ENCODE measurements at regions of chr11 and their contacts with region 1.

Region 1: GRCh38 chr11:18395735-18396504 is 1.6 kb downstream of the LDHA start:
- DNase-seq: peak; percentile 97
- ATAC-seq: peak; percentile 70
- H3K4me3 Mint-ChIP-seq: peak overlapping the region; percentile 99
- H3K27ac Mint-ChIP-seq: peak overlapping the region; percentile 98
- H3K4me1 Mint-ChIP-seq: peaks cover 60% of the 10 kb centered on the region
- H3K27me3 Mint-ChIP-seq: no peaks in the 10 kb centered on the region

Region 2: GRCh38 chr11:18027475-18027874 is 368.4 kb before region 1 on chr11:
- CTCF ChIA-PET with region 1: no interaction called
- DNase-seq: no peak
- ATAC-seq: no peak
- H3K4me3 Mint-ChIP-seq: no peak overlapping the region
- H3K27ac Mint-ChIP-seq: no peak overlapping the region
- H3K4me1 Mint-ChIP-seq: peaks cover 8% of the 10 kb centered on the region
- H3K27me3 Mint-ChIP-seq: no peaks in the 10 kb centered on the region

Region 3: DNA sequence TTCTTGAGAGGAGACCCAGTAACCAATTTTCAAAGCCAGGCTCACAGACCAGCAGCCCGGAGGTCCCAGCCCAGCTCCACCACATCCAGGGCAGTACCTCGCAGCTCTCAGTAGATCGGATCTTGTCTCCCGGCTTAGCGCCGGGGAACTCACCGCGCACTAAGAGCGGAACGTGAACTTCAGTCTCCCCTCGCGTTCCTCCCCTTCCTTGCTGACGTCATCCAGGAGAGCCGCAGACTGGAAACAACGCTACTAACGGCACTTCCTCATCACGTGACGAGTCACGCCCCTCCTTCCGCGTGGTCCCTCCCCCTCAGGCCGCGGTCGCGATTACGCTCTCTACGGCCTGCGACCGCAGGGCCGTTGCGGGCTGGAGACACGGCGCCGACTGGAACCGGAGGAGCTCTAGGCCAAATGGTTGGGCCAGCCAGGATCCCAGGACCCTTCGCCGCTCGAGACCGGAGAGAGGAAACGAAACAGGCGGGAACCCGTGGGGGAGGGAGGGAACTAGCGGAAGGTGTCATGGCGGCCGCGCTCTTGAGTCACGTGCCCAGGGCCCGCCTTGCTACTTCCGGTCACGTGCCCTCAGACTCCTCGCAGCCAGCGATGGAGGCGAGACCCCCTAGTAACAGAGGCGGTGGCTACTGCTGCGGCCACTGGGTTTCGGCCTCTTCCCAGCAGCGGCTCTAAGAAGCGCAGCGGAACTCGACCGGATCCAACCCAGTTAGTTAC is 73.8 kb before region 1 on chr11 and contains the starts of genes GTF2H1 and HPS5:
- CTCF ChIA-PET with region 1: interaction called, 25 read pairs
- DNase-seq: peak; percentile 99
- ATAC-seq: peak; percentile 88
- H3K4me3 Mint-ChIP-seq: peak within 1 kb of the TSS; percentile 97
- H3K27ac Mint-ChIP-seq: peak within 1 kb of the TSS; percentile 100
- H3K4me1 Mint-ChIP-seq: peaks cover 66% of the 10 kb centered on the region
- H3K27me3 Mint-ChIP-seq: no peaks in the 10 kb centered on the region
- total RNA-seq, gene GTF2H1: 40.0 to 47.7 TPM
- total RNA-seq, gene HPS5: 19.3 to 19.8 TPM

Region 4: DNA sequence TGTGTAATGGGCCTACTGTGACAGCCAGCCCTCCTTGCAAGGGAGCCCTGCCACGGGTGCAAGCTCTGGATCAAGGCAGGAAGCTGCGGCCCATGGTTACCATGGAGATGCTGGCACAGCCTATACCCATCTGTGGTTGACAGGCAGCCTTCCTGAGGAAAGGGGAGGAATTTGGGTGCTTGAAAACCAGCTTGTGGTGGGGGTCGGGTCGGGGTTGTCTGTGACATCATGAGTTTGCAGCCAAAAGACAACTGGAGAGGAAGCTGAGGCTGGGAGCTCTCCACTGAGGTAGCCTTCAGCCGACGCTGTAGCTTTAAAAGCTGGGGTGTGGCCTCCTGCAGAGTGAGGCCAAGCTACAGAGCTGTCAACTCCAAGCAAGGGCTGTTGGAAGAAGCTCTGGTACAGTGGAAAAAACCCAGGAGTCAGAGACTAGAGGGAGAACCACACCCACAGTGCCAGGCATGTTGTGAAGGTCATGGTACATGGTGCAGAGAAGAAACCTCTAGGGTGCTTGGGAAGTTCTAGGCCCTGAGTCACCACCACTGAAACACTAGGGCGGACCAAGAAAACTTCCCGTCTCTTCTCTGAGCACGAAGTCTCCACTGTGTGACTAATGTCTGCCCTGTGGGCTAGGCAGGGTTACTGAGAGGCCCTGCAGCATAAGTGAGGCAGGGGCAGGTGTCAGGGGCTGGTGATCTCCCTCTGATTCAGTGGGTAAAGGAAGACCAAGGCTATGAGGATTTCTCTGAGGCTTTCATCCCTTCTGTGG is 12.3 kb before region 1 on chr11:
- CTCF ChIA-PET with region 1: interaction called, 40 read pairs
- DNase-seq: peak; percentile 82
- ATAC-seq: peak; percentile 87
- H3K4me3 Mint-ChIP-seq: peak overlapping the region; percentile 38
- H3K27ac Mint-ChIP-seq: peak overlapping the region; percentile 96
- H3K4me1 Mint-ChIP-seq: peaks cover 48% of the 10 kb centered on the region
- H3K27me3 Mint-ChIP-seq: no peaks in the 10 kb centered on the region